ENCODE measurements at regions of chrX and their contacts with region 1.

Region 1: DNA sequence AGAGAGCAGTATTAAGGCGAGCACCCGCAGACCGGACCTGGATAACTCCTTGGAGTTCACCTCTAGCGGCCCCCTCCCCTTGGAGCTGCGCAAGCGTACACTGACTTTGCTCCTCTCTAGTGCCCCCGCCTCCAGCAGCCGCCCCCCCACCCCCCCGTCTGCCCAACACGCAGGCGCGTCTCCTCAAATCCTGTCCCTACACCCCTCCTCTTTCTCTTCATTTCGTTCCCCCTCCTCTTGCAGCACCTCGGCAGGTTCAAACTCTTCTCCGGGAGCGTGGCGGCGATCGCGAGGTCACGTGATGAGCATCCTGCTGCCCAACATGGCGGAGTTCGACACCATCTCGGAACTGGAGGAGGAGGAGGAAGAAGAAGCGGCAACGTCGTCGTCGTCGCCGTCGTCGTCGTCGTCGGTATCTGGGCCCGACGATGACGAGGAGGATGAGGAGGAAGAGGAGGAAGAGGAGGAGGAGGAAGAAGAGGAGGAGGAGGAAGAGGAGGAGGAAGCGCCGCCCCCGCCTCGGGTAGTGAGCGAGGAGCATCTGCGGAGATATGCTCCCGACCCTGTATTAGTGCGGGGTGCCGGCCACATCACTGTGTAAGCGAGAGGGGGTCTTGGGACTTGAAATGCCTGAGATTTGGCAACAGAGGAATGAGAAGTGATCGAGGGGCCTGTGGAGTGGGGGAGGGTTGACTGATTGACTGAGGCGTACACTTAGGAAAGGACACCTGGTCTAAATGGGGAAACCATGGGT is at the start of gene CHIC1:
- DNase-seq: peak; percentile 75
- H3K4me3 Mint-ChIP-seq: peak within 1 kb of the TSS; percentile 100
- H3K27ac Mint-ChIP-seq: peak within 1 kb of the TSS; percentile 93
- H3K4me1 Mint-ChIP-seq: peaks cover 13% of the 10 kb centered on the region
- H3K27me3 Mint-ChIP-seq: no peaks in the 10 kb centered on the region
- total RNA-seq, gene CHIC1: 3.5 to 4.5 TPM

Region 2: DNA sequence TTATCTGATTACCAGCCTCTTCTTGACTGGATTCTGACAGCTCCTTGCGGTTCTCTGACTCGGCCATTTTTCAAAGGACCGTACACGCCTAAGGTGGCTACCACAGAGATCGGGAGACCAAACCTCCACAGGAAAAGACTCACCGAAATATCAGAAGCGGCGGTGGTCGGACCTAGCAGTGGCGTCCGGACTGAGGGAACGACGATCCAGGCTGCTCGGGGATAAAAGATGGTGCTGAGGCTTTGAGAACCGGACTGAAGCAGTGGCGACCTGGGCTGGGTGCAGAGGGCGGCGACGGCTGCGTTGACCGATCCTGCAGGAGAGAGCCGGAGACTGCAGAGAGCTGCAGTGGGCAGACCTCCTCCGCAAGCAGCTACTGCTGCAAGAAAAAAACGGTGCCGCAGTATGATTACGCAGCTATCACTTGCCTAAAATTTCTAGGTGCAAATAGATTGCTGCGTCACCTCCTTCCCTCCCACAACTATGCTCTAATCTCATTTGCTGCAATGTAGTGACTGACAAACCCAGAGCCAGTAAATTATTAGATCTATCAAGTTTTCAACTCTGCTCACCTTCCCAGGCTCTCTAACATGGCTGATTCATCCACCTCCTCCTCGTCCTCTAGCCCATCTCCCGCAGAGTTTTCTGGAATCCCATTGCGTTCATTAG is 348.6 kb before region 1 on chrX and contains the start of gene NAP1L2:
- CTCF ChIA-PET with region 1: no interaction called
- intact Hi-C with region 1: loop called (anchors 10 kb)
- DNase-seq: peak; percentile 59
- H3K4me3 Mint-ChIP-seq: peak within 1 kb of the TSS; percentile 91
- H3K27ac Mint-ChIP-seq: peak within 1 kb of the TSS; percentile 91
- H3K4me1 Mint-ChIP-seq: peaks cover 19% of the 10 kb centered on the region
- H3K27me3 Mint-ChIP-seq: peaks cover 3% of the 10 kb centered on the region
- total RNA-seq, gene NAP1L2: 2.5 to 2.7 TPM

Region 3: DNA sequence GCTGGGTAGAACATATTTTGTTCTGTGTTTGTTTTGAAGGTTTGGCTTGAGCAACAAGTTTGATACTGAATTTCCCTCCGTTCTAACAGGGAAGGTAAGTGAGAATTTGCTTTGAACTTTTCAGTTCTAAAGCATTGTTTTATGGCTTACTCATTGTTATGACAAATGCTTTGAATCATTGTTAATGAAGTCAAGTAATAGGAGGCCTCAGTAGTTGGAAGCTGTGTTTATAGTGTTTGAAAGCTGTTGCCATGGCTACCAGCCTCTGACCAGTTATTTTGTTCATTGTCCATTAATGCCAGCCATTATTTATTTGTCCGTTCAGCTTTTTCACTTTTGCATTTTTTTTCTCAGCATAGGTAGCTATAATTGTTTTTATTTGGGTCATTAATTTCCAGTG is 14.2 kb after region 1 on chrX:
- CTCF ChIA-PET with region 1: no interaction called
- intact Hi-C with region 1: no loop called
- DNase-seq: no peak
- H3K4me3 Mint-ChIP-seq: no peak overlapping the region
- H3K27ac Mint-ChIP-seq: no peak overlapping the region
- H3K4me1 Mint-ChIP-seq: peaks cover 22% of the 10 kb centered on the region
- H3K27me3 Mint-ChIP-seq: no peaks in the 10 kb centered on the region

Region 4: DNA sequence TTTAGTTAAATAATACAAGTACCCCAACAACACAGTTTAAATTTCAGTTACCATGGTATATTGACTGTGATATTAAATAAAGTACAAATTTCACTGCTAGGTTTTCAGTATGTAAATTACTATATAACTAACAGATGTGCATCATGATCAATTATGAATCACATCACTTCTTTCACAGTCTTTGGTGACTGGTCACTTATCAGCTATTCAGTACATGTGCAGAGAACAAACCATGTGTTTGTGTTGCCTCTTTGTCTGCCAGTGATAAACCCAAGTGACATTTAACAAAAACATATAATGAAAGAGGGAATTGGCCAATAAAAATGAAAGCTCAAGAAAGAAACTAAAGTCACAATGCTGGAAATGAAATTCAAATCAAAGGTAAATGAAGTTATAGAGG is 249.1 kb after region 1 on chrX:
- CTCF ChIA-PET with region 1: no interaction called
- intact Hi-C with region 1: no loop called
- DNase-seq: no peak
- H3K4me3 Mint-ChIP-seq: no peak overlapping the region
- H3K27ac Mint-ChIP-seq: no peak overlapping the region
- H3K4me1 Mint-ChIP-seq: no peaks in the 10 kb centered on the region
- H3K27me3 Mint-ChIP-seq: peaks cover 3% of the 10 kb centered on the region

Region 5: GRCh38 chrX:73943693-73944562 is 380.8 kb after region 1 on chrX:
- CTCF ChIA-PET with region 1: no interaction called
- intact Hi-C with region 1: loop called (anchors 2 kb)
- DNase-seq: peak; percentile 87
- H3K4me3 Mint-ChIP-seq: peak overlapping the region; percentile 94
- H3K27ac Mint-ChIP-seq: peak overlapping the region; percentile 95
- H3K4me1 Mint-ChIP-seq: peaks cover 21% of the 10 kb centered on the region
- H3K27me3 Mint-ChIP-seq: no peaks in the 10 kb centered on the region

Region 6: GRCh38 chrX:74536152-74536831 is 973.1 kb after region 1 on chrX:
- CTCF ChIA-PET with region 1: no interaction called
- intact Hi-C with region 1: loop called (anchors 10 kb)
- DNase-seq: peak; percentile 40
- H3K4me3 Mint-ChIP-seq: peak overlapping the region; percentile 73
- H3K27ac Mint-ChIP-seq: peak overlapping the region; percentile 2
- H3K4me1 Mint-ChIP-seq: peaks cover 20% of the 10 kb centered on the region
- H3K27me3 Mint-ChIP-seq: no peaks in the 10 kb centered on the region

Measured in activated naive CD4-positive, alpha-beta T cell treated with anti-CD3 and anti-CD28 coated beads for 36 hours (primary cell).